Posterior vena cava (tissue), 2 donors: ENCODE measurements at regions of chr6 and their contacts with region 1.

Region 1: DNA sequence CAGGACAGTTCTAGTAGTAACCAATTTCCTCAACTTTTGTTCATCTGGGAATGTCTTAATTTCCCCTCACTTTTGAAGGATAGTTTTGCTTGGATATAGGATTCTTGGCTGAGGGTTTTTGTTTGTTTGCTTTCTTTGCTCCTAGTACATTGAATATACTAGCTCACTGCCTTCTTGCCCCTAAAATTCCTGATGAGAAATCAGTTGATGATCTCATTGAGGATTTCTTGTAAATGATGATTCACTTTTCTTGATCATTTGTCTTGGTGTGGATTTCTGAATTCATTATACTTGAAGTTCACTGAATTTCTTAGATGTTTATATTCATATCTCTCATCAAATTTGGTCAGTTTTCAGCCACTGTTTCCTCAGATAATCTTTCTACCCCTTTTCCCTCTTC is 49.1 kb upstream of the PRDM1 start:
- DNase-seq: no peak

Region 2: GRCh38 chr6:105324386-105324950 is 712.6 kb before region 1 on chr6:
- intact Hi-C with region 1: loop called in 1 of 2 experiments (anchors 5 kb)
- DNase-seq: no peak

Region 3: GRCh38 chr6:106069478-106069877 is 32.4 kb after region 1 on chr6:
- intact Hi-C with region 1: no loop called
- DNase-seq: no peak

Region 4: GRCh38 chr6:106199998-106200397 is 162.9 kb after region 1 on chr6:
- intact Hi-C with region 1: no loop called
- DNase-seq: no peak